A673 (cell line): ENCODE measurements at regions of chr12 and their contacts with region 1.

Region 1: GRCh38 chr12:93563807-93564538 is 8.5 kb upstream of the SOCS2 start:
- DNase-seq: peak; percentile 60
- H3K4me3 ChIP-seq: no peak overlapping the region
- H3K27ac ChIP-seq: no peak overlapping the region
- H3K4me1 ChIP-seq: no peaks in the 10 kb centered on the region
- H3K27me3 ChIP-seq: no peaks in the 10 kb centered on the region
- CTCF ChIP-seq: peak; percentile 59

Region 2: GRCh38 chr12:92879698-92880305 is 684.2 kb before region 1 on chr12:
- CTCF ChIA-PET with region 1: interaction called, 13 read pairs
- POLR2A ChIA-PET with region 1: no interaction called
- intact Hi-C with region 1: no loop called
- DNase-seq: no peak
- H3K4me3 ChIP-seq: no peak overlapping the region
- H3K27ac ChIP-seq: no peak overlapping the region
- H3K4me1 ChIP-seq: no peaks in the 10 kb centered on the region
- H3K27me3 ChIP-seq: no peaks in the 10 kb centered on the region
- CTCF ChIP-seq: no peak

Region 3: DNA sequence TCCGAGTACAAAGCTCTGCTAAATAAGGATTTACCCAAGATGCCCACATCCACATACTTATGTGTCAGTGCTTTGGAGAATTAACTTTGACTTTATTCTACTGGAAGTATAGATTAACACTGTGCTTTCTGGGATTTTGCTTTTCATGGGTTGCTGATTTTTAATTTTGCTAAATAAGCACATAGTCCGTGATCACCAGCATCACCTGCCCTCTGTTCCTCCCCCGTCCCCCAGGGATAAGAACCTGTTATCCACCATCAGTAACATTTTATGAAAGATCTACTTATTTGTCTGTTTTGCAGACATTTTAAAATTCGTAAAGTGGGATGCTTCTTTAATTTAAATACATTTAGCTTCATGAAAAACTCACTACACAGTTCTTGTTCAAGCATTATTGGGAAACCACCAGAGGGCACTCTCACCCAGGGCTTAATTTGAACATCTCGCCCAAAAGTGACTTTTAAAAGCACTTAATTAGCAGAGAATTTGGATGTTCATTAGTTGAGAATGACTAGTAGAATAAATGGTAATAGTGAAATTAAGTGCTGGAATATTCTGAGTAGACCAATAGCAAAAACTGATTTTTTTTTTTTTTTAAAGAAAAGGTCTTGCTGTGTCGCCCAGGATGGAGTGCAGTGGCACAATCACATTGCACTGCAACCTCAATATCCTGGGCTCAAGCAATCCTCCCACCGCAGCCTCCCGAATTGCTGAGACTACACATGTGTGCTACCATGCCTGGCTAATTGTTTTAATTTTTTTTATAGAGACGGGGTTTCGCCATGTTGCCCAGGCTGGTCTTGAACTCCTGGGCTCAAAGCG is 61.0 kb before region 1 on chr12:
- CTCF ChIA-PET with region 1: interaction called, 3 read pairs
- POLR2A ChIA-PET with region 1: no interaction called
- intact Hi-C with region 1: loop called (anchors 5 kb)
- DNase-seq: peak; percentile 61
- H3K4me3 ChIP-seq: no peak overlapping the region
- H3K27ac ChIP-seq: no peak overlapping the region
- H3K4me1 ChIP-seq: no peaks in the 10 kb centered on the region
- H3K27me3 ChIP-seq: no peaks in the 10 kb centered on the region
- CTCF ChIP-seq: peak; percentile 87